HepG2 (cell line): ENCODE measurements at regions of chr11 and their contacts with region 1.

Region 1: GRCh38 chr11:29328961-29329441 is 687.8 kb downstream of the KCNA4 start:
- DNase-seq: peak; percentile 35
- ATAC-seq: peak; percentile 83
- H3K4me3 ChIP-seq: no peak overlapping the region
- H3K27ac ChIP-seq: no peak overlapping the region
- H3K4me1 ChIP-seq: no peaks in the 10 kb centered on the region; the same call in 1 of the 2 replicates
- H3K27me3 ChIP-seq: peaks cover 0 to 1% of the 10 kb centered on the region in 2 experiments; a peak in 1 of 5 replicates
- CTCF ChIP-seq: peak; percentile 77
- EP300 ChIP-seq: no peak
- POLR2A ChIP-seq: no peak
- RAD21 ChIP-seq: peak; percentile 43

Region 2: DNA sequence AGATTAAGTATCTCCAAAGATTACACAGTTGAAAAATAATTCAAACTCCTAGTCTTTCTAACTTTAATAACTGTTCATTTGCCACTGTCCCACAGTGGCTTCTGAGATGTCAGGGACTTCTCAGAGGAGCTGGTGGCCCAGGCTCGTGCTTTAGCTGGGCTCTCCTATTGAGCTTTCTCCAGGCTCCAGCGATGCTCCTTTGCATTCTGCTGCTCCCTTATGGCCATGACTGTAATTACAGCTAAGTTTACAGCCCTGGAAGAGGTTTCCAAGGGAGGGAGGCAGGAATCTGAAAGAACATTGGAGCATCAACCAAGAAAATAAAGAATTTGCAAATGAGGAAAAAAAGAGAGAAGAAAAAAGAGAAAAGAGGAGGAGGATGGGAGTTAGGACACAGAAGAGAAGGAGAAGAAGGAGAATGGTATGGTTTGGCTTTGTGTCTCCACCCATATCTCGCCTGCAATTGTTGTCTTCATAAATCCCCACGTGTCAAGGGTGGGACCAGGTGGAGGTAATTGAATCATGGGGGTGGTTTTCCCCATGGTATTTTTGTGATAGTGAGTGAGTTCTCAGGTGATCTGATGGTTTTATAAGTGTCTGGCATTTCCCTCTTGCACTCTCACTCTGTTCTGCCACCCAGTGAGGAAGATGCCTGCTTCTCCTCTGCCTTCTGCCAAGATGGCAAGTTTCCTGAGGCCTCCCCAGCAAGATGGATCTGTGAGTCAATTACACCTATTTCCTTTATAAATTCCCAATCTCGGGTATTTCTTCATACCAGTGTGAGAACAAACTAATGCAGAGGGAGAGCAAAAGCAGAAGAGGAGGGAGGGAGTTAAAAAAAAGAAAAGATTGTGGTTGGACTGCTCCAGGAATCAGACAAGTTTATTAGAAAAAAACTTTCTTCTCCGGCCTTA is 169.2 kb before region 1 on chr11:
- CTCF ChIA-PET with region 1: no interaction called
- POLR2A ChIA-PET with region 1: no interaction called
- in situ Hi-C with region 1: no loop called
- intact Hi-C with region 1: loop called (anchors 1 kb)
- DNase-seq: peak; percentile 20
- ATAC-seq: peak; percentile 94
- H3K4me3 ChIP-seq: no peak overlapping the region
- H3K27ac ChIP-seq: no peak overlapping the region
- H3K4me1 ChIP-seq: no peaks in the 10 kb centered on the region
- H3K27me3 ChIP-seq: no peaks in the 10 kb centered on the region
- CTCF ChIP-seq: peak; percentile 78
- EP300 ChIP-seq: no peak
- POLR2A ChIP-seq: no peak
- RAD21 ChIP-seq: 0 out of 2 replicates have a peak, but pooled peaks have one; percentile 25

Region 3: DNA sequence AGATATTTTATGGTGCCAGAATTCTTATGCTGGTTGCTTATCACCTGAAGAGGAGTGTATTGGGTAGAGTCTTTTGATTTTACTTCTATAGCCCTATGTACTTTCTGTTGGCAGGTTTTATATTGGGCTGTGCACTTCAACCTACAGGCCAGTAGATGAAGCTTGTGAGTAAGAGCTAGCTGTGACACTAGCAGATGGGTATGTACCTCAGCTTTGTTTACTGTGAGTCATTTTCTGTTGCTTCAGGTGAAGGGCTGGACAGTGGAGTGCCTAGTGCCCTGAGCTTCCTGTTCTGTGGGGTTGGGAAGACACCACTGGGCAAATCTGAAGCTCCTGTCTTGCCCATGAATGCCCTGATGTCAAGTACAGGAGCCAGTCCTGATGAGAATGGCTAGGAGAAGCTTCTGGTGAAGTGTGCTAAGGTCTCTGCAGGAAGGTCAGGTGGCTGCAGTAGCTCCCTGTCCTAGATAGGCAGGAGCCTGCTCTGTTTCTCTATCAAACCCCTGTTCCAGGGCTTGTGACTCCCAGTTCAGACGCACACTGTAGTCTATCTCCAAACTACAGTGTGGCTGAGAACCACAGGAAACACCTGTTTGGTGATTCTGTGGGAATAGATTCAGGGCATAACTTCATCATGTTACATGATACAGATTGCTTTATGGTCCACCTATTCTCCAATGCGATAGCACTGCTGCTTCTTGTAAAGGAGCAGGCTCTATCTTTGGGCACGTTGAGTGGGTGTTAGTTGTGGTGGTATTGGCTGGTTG is 67.9 kb before region 1 on chr11:
- CTCF ChIA-PET with region 1: interaction called, 7 read pairs
- POLR2A ChIA-PET with region 1: interaction called, 9 read pairs
- in situ Hi-C with region 1: no loop called
- intact Hi-C with region 1: loop called (anchors 1 kb)
- DNase-seq: peak; percentile 51
- ATAC-seq: peak; percentile 100
- H3K4me3 ChIP-seq: no peak overlapping the region
- H3K27ac ChIP-seq: no peak overlapping the region
- H3K4me1 ChIP-seq: no peaks in the 10 kb centered on the region
- H3K27me3 ChIP-seq: no peaks in the 10 kb centered on the region
- CTCF ChIP-seq: peak; percentile 45
- EP300 ChIP-seq: no peak
- POLR2A ChIP-seq: no peak
- RAD21 ChIP-seq: no peak

Region 4: DNA sequence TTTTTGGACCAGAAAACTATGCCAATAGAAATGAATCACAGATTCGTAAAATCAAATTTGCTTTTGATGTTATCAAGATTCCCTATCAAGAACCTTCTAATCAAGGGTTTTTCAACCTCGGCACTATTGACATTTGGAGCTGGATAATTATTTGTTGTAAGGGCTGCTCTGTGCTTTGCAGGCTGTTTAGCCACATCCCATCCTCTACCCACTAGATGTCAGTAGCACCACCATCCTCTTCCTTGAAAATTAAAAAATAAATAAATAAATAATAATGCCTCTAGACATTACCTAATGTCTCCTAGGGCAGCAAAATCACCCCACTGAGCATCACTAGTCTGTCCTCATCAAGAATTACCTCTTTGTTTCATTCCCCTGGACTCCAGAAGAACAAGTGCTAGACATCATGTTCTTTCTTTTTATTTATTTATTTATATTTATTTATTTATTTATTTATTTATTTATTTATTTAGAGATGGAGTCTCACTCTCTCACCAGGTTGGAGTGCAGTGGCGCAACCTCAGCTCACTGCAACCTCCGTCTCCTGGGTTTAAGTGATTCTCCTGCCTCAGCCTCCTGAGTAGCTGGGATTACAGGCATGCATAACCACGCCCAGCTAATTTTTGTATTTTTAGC is 56.9 kb before region 1 on chr11:
- CTCF ChIA-PET with region 1: interaction called, 4 read pairs
- POLR2A ChIA-PET with region 1: no interaction called
- in situ Hi-C with region 1: no loop called
- intact Hi-C with region 1: loop called (anchors 1 kb)
- DNase-seq: no peak
- ATAC-seq: peak; percentile 39; the same call in 2 of the 3 replicates
- H3K4me3 ChIP-seq: no peak overlapping the region
- H3K27ac ChIP-seq: no peak overlapping the region
- H3K4me1 ChIP-seq: peaks cover 5% of the 10 kb centered on the region; the same call in 1 of the 2 replicates
- H3K27me3 ChIP-seq: no peaks in the 10 kb centered on the region
- CTCF ChIP-seq: no peak
- EP300 ChIP-seq: no peak
- POLR2A ChIP-seq: no peak
- RAD21 ChIP-seq: no peak

Region 5: GRCh38 chr11:29343465-29344333 is 14.7 kb after region 1 on chr11:
- CTCF ChIA-PET with region 1: no interaction called
- POLR2A ChIA-PET with region 1: no interaction called
- in situ Hi-C with region 1: no loop called
- intact Hi-C with region 1: no loop called
- DNase-seq: peak; percentile 28
- ATAC-seq: peak; percentile 98
- H3K4me3 ChIP-seq: no peak overlapping the region
- H3K27ac ChIP-seq: no peak overlapping the region
- H3K4me1 ChIP-seq: no peaks in the 10 kb centered on the region
- H3K27me3 ChIP-seq: no peaks in the 10 kb centered on the region
- CTCF ChIP-seq: peak; percentile 81
- EP300 ChIP-seq: no peak
- POLR2A ChIP-seq: no peak
- RAD21 ChIP-seq: no peak